CD14-positive monocyte (primary cell): ENCODE measurements at regions of chr4 and their contacts with region 1.

Region 1: DNA sequence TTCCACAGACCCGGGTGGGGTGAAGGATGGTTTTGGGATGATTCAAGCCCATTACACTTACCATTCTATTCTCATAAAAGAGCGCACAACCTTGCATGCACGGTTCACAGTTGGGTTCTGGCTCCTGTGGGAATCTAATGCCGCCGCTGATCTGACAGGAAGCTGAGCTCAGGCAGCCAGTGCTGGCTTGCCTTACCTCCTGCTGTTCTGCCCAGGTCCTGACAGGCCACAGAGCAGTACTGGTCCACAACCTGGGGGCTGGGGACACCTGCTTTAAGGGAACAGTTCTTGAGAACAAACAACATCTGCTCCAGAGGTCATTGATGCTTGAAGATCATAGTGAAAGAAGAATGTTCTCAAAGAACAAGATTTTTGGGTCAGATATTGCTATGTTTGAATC is 8.0 kb upstream of the HS3ST1 start:
- DNase-seq: no peak
- H3K4me3 ChIP-seq: no peak overlapping the region
- H3K4me3 Mint-ChIP-seq: no peak overlapping the region
- H3K27ac ChIP-seq: no peak overlapping the region
- H3K27ac Mint-ChIP-seq: no peak overlapping the region
- H3K4me1 ChIP-seq: peaks cover 14 to 15% of the 10 kb centered on the region in 2 donors
- H3K4me1 Mint-ChIP-seq: peaks cover 12% of the 10 kb centered on the region
- H3K27me3 ChIP-seq: no peaks in the 10 kb centered on the region
- H3K27me3 Mint-ChIP-seq: peaks cover 3 to 7% (median 5%) of the 10 kb centered on the region in 3 donors
- CTCF ChIP-seq: no peak

Region 2: GRCh38 chr4:11393551-11393950 is 43.1 kb before region 1 on chr4:
- intact Hi-C with region 1: no loop called
- DNase-seq: no peak
- H3K4me3 ChIP-seq: no peak overlapping the region
- H3K4me3 Mint-ChIP-seq: no peak overlapping the region
- H3K27ac ChIP-seq: no peak overlapping the region
- H3K27ac Mint-ChIP-seq: no peak overlapping the region
- H3K4me1 ChIP-seq: peaks cover 0 to 4% of the 10 kb centered on the region in 2 donors
- H3K4me1 Mint-ChIP-seq: peaks cover 14% of the 10 kb centered on the region
- H3K27me3 ChIP-seq: no peaks in the 10 kb centered on the region
- H3K27me3 Mint-ChIP-seq: peaks cover 0 to 3% (median 0%) of the 10 kb centered on the region in 3 donors
- CTCF ChIP-seq: no peak

Region 3: DNA sequence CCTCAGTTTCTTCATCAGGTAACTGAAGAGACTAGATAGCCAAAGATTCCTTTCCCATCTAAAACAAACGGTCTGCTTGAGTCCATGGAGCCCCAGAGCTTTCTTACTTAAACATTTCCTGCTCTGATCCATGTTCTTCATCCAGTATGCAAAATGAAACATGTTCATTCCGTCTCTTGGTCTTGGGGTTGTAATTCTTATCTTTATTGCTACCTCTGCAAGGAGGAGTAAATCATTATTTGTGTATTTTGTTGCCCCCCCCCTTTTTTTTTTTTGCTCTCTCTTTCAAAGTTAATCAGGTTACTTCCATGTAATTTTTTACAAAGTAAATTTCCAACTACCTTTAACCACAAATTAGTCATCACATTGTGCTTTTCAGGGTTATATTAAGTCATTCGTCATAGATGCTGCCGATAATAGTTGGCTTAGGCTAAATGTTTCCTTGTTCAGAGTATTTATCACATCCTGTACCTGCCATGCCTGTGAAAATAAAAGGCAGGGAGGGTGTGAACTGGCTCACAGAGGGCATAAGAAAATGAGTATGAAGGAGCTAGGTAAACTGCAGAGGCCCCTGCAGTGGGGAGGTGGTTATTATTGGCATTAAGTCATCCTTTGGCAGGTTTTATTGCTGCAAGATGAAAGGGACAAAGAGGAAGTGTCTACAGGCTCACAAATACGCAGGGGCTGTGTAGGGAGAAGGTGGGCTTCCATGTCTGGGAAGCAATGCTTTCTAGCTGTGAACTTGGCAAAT is 68.7 kb after region 1 on chr4:
- intact Hi-C with region 1: loop called in 1 of 2 experiments (anchors 10 kb)
- DNase-seq: no peak
- H3K4me3 ChIP-seq: no peak overlapping the region
- H3K4me3 Mint-ChIP-seq: no peak overlapping the region
- H3K27ac ChIP-seq: no peak overlapping the region
- H3K27ac Mint-ChIP-seq: no peak overlapping the region
- H3K4me1 ChIP-seq: no peaks in the 10 kb centered on the region
- H3K4me1 Mint-ChIP-seq: no peaks in the 10 kb centered on the region
- H3K27me3 ChIP-seq: no peaks in the 10 kb centered on the region
- H3K27me3 Mint-ChIP-seq: peaks cover 0 to 1% (median 0%) of the 10 kb centered on the region in 3 donors
- CTCF ChIP-seq: no peak